Activated T-helper 1 cell treated with anti-CD3 and anti-CD28 coated beads, Interleukin-12 subunit alpha, Interleukin-12 subunit beta, Interleukin-2, Interleukin-4 antibody, amounts not matched to agents 30 ng/mL and 10 ng/mL and 1 ng/mL, durations not matched to agents 14 hours and 24 hours and 36 hours (primary cell): ENCODE measurements at regions of chr16 and their contacts with region 1.

Region 1: GRCh38 chr16:24516900-24517669 is 22.3 kb upstream of the RBBP6 start:
- DNase-seq: peak; percentile 62
- H3K4me3 Mint-ChIP-seq: no peak overlapping the region
- H3K27ac Mint-ChIP-seq: no peak overlapping the region
- H3K4me1 Mint-ChIP-seq: peaks cover 16% of the 10 kb centered on the region
- H3K27me3 Mint-ChIP-seq: peaks cover 9% of the 10 kb centered on the region

Region 2: DNA sequence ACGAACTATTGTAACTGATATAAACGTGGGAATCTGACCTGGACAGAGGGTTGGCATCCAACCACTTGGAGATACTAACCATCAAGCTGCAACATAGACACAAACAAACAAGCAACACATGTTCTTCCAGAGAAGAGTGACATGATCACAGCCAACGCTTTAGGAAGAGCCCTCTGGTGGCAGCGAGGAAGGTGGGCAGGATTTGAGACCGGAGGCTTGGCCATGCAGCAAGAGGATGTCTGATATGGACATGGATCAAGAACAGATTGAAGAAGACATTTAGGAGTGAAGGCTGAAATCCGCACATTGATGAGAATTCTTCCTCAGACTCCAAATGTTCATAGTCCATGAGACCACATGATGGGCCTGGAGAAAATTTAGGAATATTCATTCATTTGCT is 172.1 kb after region 1 on chr16:
- intact Hi-C with region 1: loop called (anchors 2 kb)
- DNase-seq: no peak
- H3K4me3 Mint-ChIP-seq: no peak overlapping the region
- H3K27ac Mint-ChIP-seq: no peak overlapping the region
- H3K4me1 Mint-ChIP-seq: peaks cover 5% of the 10 kb centered on the region
- H3K27me3 Mint-ChIP-seq: no peaks in the 10 kb centered on the region

Region 3: GRCh38 chr16:24800586-24800985 is 283.5 kb after region 1 on chr16:
- intact Hi-C with region 1: loop called (anchors 5 kb)
- DNase-seq: no peak
- H3K4me3 Mint-ChIP-seq: no peak overlapping the region
- H3K27ac Mint-ChIP-seq: no peak overlapping the region
- H3K4me1 Mint-ChIP-seq: no peaks in the 10 kb centered on the region
- H3K27me3 Mint-ChIP-seq: no peaks in the 10 kb centered on the region